ENCODE measurements at regions of chr15 and their contacts with region 1.

Region 1: GRCh38 chr15:55221090-55222011 is 24.6 kb upstream of the RSL24D1 start:
- DNase-seq: peak in 3 of 5 donors; percentile 6 to 51 (median 24)
- H3K4me3 ChIP-seq: no peak overlapping the region
- H3K4me3 Mint-ChIP-seq: peak overlapping the region; percentile 0 to 69 (median 63)
- H3K27ac ChIP-seq: peak overlapping the region; percentile 20
- H3K27ac Mint-ChIP-seq: peak overlapping the region; percentile 55 to 97 (median 87)
- H3K4me1 ChIP-seq: peaks cover 60% of the 10 kb centered on the region
- H3K4me1 Mint-ChIP-seq: peaks cover 70 to 83% (median 82%) of the 10 kb centered on the region in 3 donors
- H3K27me3 ChIP-seq: no peaks in the 10 kb centered on the region
- H3K27me3 Mint-ChIP-seq: no peaks in the 10 kb centered on the region

Region 2: DNA sequence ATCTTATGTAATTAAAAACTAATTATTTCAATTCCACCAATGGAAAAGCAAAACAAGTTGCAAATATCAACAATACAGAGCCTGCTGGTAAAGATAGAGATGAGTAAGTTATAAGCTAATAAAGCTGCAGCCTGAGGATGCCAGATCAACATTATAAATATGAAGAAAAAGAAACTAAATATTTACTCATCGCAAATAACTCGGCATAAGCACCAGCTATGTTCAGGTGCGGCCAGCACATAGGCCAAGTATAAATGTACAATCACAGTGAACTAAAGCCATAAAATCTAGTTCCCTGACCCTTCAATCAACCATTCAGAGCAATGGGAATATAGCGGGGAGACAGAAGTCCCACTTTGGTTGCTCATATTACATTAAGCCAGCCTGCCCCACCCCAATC is 16.9 kb before region 1 on chr15:
- CTCF ChIA-PET with region 1: interaction called, 13 read pairs
- POLR2A ChIA-PET with region 1: no interaction called
- DNase-seq: no peak
- H3K4me3 ChIP-seq: no peak overlapping the region
- H3K4me3 Mint-ChIP-seq: no peak overlapping the region
- H3K27ac ChIP-seq: no peak overlapping the region
- H3K27ac Mint-ChIP-seq: no peak overlapping the region
- H3K4me1 ChIP-seq: no peaks in the 10 kb centered on the region
- H3K4me1 Mint-ChIP-seq: peaks cover 2 to 12% (median 6%) of the 10 kb centered on the region in 3 donors
- H3K27me3 ChIP-seq: no peaks in the 10 kb centered on the region
- H3K27me3 Mint-ChIP-seq: no peaks in the 10 kb centered on the region

Region 3: DNA sequence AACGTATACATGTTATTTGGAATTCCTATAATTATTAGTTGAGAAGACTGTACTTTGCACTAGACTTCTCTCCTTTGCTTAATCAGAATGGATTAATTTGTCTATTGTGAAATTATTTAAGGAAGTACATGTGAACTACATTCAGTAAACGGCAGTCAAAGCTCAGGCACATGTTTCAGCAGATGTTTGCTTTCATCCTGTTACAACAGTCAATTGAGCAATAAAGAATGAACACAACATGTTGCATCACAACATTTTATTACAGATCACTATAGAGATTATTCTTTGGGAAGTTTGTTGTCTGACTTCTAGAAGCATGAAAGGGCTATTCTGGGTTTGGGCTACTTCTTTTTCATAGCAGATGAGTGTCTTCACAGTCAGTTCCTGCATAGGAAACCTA is 29.0 kb after region 1 on chr15:
- CTCF ChIA-PET with region 1: interaction called, 10 read pairs
- POLR2A ChIA-PET with region 1: interaction called, 7 read pairs
- DNase-seq: no peak
- H3K4me3 ChIP-seq: no peak overlapping the region
- H3K4me3 Mint-ChIP-seq: peak overlapping the region in 6 of 7 donors; percentile 5 to 58 (median 52)
- H3K27ac ChIP-seq: no peak overlapping the region
- H3K27ac Mint-ChIP-seq: peak overlapping the region; percentile 71 to 97 (median 84)
- H3K4me1 ChIP-seq: peaks cover 56% of the 10 kb centered on the region
- H3K4me1 Mint-ChIP-seq: peaks cover 76 to 94% (median 90%) of the 10 kb centered on the region in 3 donors
- H3K27me3 ChIP-seq: no peaks in the 10 kb centered on the region
- H3K27me3 Mint-ChIP-seq: no peaks in the 10 kb centered on the region

Region 4: DNA sequence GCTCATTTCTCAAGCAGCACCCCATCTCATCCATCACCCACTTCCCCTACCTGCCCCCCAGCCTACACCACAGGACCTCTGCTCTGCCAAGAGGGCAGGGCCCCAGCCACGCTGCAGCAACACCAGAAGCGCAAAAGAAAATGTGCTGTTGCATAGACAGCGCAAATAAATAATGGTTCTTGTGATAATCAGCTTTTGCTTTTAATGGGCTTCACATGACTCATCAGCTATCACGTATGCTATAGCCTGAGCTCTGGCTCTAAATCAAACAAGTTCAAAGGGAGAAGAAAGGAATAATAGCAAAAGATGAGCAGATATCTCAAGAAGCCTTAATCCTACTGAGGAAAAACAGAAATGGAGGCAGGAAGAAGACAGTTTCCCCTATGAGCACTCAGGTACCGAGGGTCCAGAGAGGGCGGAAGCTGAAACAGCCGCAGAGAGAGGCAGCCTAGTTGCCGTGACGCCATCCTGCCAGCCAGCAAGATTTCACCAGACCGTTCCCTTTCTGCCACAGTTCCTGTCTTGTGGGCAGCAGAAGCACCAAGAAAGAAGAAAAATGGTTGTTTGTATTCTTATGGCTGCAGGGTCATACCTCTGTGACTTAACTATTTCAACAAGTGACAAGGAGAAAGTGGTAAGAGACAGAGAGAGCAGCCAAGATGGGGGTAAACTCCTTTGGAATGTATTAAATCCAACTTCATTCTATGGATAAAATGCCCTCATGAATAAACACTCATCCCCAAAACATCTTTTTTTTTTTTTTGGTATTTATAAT is 46.2 kb after region 1 on chr15:
- CTCF ChIA-PET with region 1: interaction called, 20 read pairs
- POLR2A ChIA-PET with region 1: interaction called, 6 read pairs
- DNase-seq: peak; percentile 65 to 90 (median 85)
- H3K4me3 ChIP-seq: peak overlapping the region; percentile 55
- H3K4me3 Mint-ChIP-seq: peak overlapping the region; percentile 44 to 83 (median 68)
- H3K27ac ChIP-seq: peak overlapping the region; percentile 81
- H3K27ac Mint-ChIP-seq: peak overlapping the region; percentile 91 to 98 (median 96)
- H3K4me1 ChIP-seq: peaks cover 74% of the 10 kb centered on the region
- H3K4me1 Mint-ChIP-seq: peaks cover 87 to 99% (median 91%) of the 10 kb centered on the region in 3 donors
- H3K27me3 ChIP-seq: no peaks in the 10 kb centered on the region
- H3K27me3 Mint-ChIP-seq: no peaks in the 10 kb centered on the region

Region 5: DNA sequence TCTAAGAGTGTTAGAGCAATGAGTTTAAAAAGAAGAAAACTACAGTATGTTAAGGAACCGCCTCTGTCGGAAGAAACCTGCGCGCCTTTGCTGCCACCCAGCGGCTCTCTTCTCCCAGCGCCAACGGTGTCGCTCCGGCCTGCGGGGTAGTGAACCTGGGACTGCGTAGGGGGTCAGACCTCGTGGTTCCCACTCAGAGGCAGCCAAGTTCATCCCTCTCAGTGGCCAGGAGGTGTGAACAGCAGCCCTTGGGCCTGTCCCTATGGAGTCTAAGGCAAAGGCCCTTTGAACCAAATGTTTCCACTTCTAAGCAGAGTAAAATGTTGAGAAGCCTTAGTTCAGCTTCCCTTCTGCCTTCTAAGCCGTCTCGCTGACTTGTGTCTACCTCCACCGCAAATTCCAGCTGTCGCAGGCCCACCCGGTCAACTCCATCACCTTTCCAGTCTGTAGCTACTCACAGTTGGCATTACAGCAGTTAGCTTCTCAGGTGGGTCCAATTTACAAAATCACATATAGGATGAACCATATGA is 69.2 kb after region 1 on chr15:
- CTCF ChIA-PET with region 1: interaction called, 80 read pairs
- POLR2A ChIA-PET with region 1: interaction called, 6 read pairs
- DNase-seq: peak; percentile 75 to 90 (median 80)
- H3K4me3 ChIP-seq: peak overlapping the region; percentile 87
- H3K4me3 Mint-ChIP-seq: peak overlapping the region; percentile 92 to 99 (median 97)
- H3K27ac ChIP-seq: peak overlapping the region; percentile 91
- H3K27ac Mint-ChIP-seq: peak overlapping the region; percentile 94 to 99 (median 96)
- H3K4me1 ChIP-seq: peaks cover 16% of the 10 kb centered on the region
- H3K4me1 Mint-ChIP-seq: peaks cover 29 to 39% (median 39%) of the 10 kb centered on the region in 3 donors
- H3K27me3 ChIP-seq: no peaks in the 10 kb centered on the region
- H3K27me3 Mint-ChIP-seq: no peaks in the 10 kb centered on the region

Region 6: GRCh38 chr15:55434989-55435825 is 213.9 kb after region 1 on chr15:
- CTCF ChIA-PET with region 1: interaction called, 10 read pairs
- POLR2A ChIA-PET with region 1: interaction called, 5 read pairs
- DNase-seq: peak in 2 of 5 donors; percentile 12 to 37
- H3K4me3 ChIP-seq: no peak overlapping the region
- H3K4me3 Mint-ChIP-seq: no peak overlapping the region
- H3K27ac ChIP-seq: no peak overlapping the region
- H3K27ac Mint-ChIP-seq: no peak overlapping the region
- H3K4me1 ChIP-seq: no peaks in the 10 kb centered on the region
- H3K4me1 Mint-ChIP-seq: peaks cover 5 to 13% (median 12%) of the 10 kb centered on the region in 3 donors
- H3K27me3 ChIP-seq: no peaks in the 10 kb centered on the region
- H3K27me3 Mint-ChIP-seq: peaks cover 4 to 7% of the 10 kb centered on the region in 2 donors

Region 7: DNA sequence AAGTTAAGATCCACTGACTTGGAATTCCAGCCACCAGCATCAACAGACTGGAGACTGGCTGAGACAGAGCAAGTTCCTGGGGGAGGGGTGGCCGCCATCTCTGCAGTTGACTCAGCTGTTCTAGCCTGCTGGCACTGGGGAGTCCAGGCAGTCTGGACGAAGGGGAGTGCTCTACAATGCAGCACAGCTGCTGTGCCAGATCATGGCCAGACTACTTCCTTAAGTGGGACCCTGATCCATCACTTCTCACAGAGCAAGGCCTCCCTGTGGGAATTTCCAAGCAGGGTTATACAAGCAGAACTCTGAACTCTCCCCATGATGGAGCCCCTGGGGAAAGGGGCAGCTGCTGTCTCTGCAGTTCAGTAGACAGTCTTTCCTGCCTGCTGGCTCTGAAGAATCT is 331.6 kb after region 1 on chr15:
- CTCF ChIA-PET with region 1: no interaction called
- POLR2A ChIA-PET with region 1: no interaction called
- DNase-seq: no peak
- H3K4me3 ChIP-seq: no peak overlapping the region
- H3K4me3 Mint-ChIP-seq: no peak overlapping the region
- H3K27ac ChIP-seq: no peak overlapping the region
- H3K27ac Mint-ChIP-seq: no peak overlapping the region
- H3K4me1 ChIP-seq: no peaks in the 10 kb centered on the region
- H3K4me1 Mint-ChIP-seq: no peaks in the 10 kb centered on the region
- H3K27me3 ChIP-seq: no peaks in the 10 kb centered on the region
- H3K27me3 Mint-ChIP-seq: peaks cover 10 to 36% of the 10 kb centered on the region in 2 donors